A673 (cell line): ENCODE measurements at regions of chr1 and their contacts with region 1.

Region 1: GRCh38 chr1:23904748-23905357 is 8.3 kb downstream of the CNR2 start:
- DNase-seq: no peak
- H3K4me3 ChIP-seq: no peak overlapping the region
- H3K27ac ChIP-seq: no peak overlapping the region
- H3K4me1 ChIP-seq: no peaks in the 10 kb centered on the region
- H3K27me3 ChIP-seq: no peaks in the 10 kb centered on the region
- CTCF ChIP-seq: no peak

Region 2: DNA sequence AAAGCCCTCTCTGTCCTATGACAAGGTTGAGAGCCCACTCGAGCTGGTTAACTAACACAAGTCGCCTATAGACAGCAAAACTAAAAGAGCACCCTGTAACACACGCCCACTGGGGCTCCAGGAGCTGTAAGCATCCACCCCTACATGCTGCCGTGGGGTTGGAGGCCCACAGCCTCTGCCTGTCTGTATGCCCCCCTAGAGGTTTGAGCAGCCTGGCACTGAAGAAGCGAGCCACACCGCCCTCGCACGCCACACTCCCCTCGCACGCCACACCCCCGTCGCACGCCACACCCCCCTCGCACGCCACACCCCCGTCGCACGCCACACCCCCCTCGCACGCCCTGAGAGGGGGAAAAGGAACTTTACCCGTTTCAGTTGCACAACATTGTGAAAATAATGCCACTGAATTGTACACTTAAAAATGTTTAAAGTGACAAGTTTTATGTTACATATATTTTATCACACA is 66.4 kb before region 1 on chr1:
- CTCF ChIA-PET with region 1: no interaction called
- POLR2A ChIA-PET with region 1: no interaction called
- intact Hi-C with region 1: no loop called
- DNase-seq: peak; percentile 79
- H3K4me3 ChIP-seq: peak overlapping the region; percentile 37
- H3K27ac ChIP-seq: no peak overlapping the region
- H3K4me1 ChIP-seq: peaks cover 8% of the 10 kb centered on the region
- H3K27me3 ChIP-seq: peaks cover 3% of the 10 kb centered on the region
- CTCF ChIP-seq: no peak

Region 3: DNA sequence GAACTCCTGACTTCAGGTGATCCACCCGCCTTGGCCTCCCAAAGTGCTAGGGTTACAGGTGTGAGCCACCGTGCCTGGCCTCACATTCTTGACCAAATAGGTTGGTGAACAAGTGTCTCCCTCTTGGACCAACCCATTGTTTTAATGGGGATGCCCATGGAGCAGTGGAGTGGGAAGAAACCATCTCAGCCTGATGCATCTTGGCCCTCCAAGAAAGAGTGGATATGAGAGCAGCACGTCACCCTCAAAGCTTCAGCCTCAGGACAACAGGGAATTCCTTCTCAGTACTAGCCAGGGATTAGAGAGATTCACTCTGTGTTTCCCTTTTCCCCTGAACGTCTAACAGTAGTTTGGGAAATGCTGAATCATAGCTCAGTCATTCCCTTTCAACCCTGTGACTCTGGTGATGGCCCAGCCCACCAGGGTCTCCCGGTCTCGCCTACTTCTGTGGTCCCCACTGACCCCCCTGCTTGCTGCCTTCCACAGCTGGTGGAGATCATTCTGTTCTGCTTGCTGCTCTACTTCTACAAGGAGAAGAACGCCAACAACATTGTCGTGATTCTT is 548.2 kb after region 1 on chr1:
- CTCF ChIA-PET with region 1: no interaction called
- POLR2A ChIA-PET with region 1: interaction called, 12 read pairs
- intact Hi-C with region 1: no loop called
- DNase-seq: no peak
- H3K4me3 ChIP-seq: no peak overlapping the region
- H3K27ac ChIP-seq: no peak overlapping the region
- H3K4me1 ChIP-seq: no peaks in the 10 kb centered on the region
- H3K27me3 ChIP-seq: no peaks in the 10 kb centered on the region
- CTCF ChIP-seq: no peak